Psoas muscle (tissue), 8 donors: ENCODE measurements at regions of chr18 and their contacts with region 1.

Region 1: GRCh38 chr18:12657684-12658425 is at the start of gene SPIRE1:
- DNase-seq: peak; percentile 76 to 86
- ATAC-seq: peak; percentile 81 to 88 (median 84)
- H3K4me3 ChIP-seq: peak within 1 kb of the TSS; percentile 93
- H3K27ac ChIP-seq: peak within 1 kb of the TSS; percentile 96
- H3K4me1 ChIP-seq: peaks cover 15% of the 10 kb centered on the region
- H3K27me3 ChIP-seq: no peaks in the 10 kb centered on the region
- CTCF ChIP-seq: no peak
- total RNA-seq, gene SPIRE1: 36.6 to 82.3 (median 41.9) TPM

Region 2: DNA sequence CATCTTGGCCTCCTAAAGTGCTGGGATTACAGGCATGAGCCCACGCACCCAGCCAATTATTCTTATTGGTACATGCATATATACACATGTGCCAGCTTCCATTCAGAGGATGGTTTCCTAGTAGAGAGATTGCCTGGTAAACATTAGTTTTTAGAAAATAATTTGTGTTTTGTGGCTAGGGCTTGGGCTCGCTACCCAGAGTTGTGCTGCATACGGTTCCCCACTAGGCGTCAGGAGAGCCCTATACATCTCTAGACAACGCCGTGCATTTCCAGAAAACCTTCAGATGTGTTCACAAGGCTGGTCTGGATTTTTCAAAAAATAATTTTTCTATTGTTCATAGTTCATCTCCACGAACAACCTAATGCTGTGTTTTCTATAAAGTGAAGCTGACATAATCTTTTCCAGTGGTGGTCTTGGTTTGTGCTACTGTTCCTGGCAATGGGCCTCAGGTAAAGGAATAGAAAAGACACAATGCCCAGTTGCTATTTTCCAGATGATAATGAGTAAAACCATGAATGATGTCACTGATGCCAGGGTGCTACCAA is 266.2 kb before region 1 on chr18:
- intact Hi-C with region 1: loop called (anchors 2 kb)
- DNase-seq: peak; percentile 50 to 56
- ATAC-seq: peak; percentile 84 to 98 (median 91)
- H3K4me3 ChIP-seq: no peak overlapping the region
- H3K27ac ChIP-seq: no peak overlapping the region
- H3K4me1 ChIP-seq: no peaks in the 10 kb centered on the region
- H3K27me3 ChIP-seq: no peaks in the 10 kb centered on the region
- CTCF ChIP-seq: peak; percentile 91

Region 3: DNA sequence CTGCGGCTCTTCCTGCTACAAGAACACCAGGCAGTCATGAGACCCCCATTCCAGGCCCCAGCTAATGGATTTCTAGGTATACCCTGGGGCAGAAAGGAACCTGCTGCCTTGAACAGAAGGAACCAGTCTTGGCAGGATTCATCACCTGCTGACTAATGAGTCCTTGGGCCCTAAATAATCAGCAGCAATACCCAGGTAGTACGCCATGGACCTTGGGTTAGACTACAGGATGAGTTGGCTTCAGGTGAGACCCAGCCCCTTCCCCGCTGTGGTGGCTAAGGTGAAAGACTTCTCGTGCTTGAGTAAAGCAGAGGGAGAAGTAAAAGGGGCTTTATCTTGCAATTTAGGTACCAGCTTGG is 105.0 kb before region 1 on chr18:
- intact Hi-C with region 1: loop called in 1 of 2 experiments (anchors 5 kb)
- DNase-seq: no peak
- ATAC-seq: peak in 2 of 4 donors; percentile 31 to 51
- H3K4me3 ChIP-seq: no peak overlapping the region
- H3K27ac ChIP-seq: peak overlapping the region; percentile 78
- H3K4me1 ChIP-seq: peaks cover 26% of the 10 kb centered on the region
- H3K27me3 ChIP-seq: no peaks in the 10 kb centered on the region
- CTCF ChIP-seq: no peak